Activated T-helper 1 cell treated with anti-CD3 and anti-CD28 coated beads, Interleukin-12 subunit alpha, Interleukin-12 subunit beta, Interleukin-2, Interleukin-4 antibody, amounts not matched to agents 30 ng/mL and 10 ng/mL and 1 ng/mL, durations not matched to agents 14 hours and 24 hours and 36 hours (primary cell): ENCODE measurements at regions of chr1 and their contacts with region 1.

Region 1: DNA sequence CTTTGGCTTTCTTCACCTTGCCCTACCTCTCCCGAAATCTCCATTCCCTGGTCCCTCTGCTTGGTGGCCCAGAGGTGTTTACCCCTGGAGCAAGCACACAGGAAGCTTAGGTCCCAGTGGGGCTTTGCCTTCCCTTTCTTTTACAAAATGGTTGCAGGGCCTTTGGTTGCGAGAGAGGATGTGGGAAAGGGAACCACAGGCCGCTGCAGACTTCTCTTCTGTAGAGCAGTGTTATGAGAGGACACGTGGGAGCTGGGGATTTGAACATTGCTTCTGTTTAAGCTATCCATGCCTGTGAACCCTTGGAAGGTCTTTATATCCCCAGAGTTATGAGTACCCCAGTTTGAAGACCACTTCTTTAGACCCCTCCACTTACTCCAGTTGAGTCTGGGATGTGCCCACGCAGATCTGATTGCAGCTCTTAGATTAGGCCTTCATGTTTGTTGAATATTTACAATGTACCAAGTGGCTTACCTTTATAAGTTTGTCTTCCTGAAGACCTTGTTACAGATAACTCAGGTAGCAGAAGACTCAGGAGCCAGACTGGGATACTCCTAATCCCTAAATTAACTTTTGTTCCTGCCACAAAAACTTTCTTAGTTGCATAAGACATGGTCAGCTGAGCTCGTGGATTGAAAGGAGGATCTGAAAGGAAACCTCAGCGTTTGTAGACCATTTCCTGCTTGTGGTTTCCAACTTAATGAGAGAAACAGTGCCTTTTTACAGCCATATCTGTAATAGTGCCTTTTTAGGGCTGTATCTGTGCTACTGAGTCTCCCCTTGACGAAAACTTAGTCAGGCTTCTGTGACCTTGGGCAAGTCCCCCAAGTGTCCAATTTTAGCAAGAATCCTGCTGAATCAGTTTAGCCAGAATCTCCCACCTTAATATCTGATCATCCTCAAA is 21.9 kb upstream of the IVNS1ABP start:
- DNase-seq: peak; percentile 63
- H3K4me3 Mint-ChIP-seq: peak overlapping the region; percentile 13
- H3K27ac Mint-ChIP-seq: peak overlapping the region; percentile 78
- H3K4me1 Mint-ChIP-seq: peaks cover 43% of the 10 kb centered on the region
- H3K27me3 Mint-ChIP-seq: no peaks in the 10 kb centered on the region

Region 2: GRCh38 chr1:185420588-185421081 is 81.7 kb after region 1 on chr1:
- intact Hi-C with region 1: loop called (anchors 5 kb)
- DNase-seq: peak; percentile 49
- H3K4me3 Mint-ChIP-seq: peak overlapping the region; percentile 17
- H3K27ac Mint-ChIP-seq: peak overlapping the region; percentile 77
- H3K4me1 Mint-ChIP-seq: peaks cover 76% of the 10 kb centered on the region
- H3K27me3 Mint-ChIP-seq: no peaks in the 10 kb centered on the region